ENCODE measurements at regions of chr13 and their contacts with region 1.

Region 1: DNA sequence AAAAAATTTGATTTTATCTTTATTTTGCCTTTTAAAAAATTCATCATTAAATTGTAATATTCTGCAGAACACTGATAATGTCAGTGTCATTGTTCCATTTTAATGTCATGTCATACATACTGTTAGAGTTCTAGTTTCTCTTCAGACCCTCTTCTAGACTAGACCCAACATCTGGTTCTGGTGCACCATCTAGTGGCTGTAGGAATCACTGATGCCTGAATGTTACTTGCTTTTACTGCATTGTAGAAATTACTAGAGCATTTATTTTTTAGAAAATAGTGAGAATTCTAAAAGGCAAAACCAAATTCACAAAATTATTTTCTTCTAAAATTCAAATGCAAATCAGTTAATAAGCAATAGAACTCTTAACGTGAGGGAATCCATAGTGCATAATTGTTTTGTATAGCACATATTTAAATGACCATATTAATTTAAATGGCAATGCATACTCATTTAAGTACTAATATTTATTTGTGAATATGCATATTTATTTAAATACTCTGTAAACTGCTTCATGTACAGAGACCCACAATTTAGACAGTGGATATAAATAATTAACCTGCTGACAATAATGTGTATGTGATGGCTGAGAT is 425.7 kb downstream of the KLF12 start:
- DNase-seq: peak; percentile 54 to 73 (median 65)
- H3K4me3 ChIP-seq: no peak overlapping the region
- H3K4me3 Mint-ChIP-seq: no peak overlapping the region
- H3K27ac ChIP-seq: no peak overlapping the region
- H3K27ac Mint-ChIP-seq: peak overlapping the region in 2 of 7 donors; percentile 70 to 75
- H3K4me1 ChIP-seq: peaks cover 10% of the 10 kb centered on the region
- H3K4me1 Mint-ChIP-seq: peaks cover 13 to 31% (median 20%) of the 10 kb centered on the region in 4 donors
- H3K27me3 ChIP-seq: no peaks in the 10 kb centered on the region
- H3K27me3 Mint-ChIP-seq: no peaks in the 10 kb centered on the region

Region 2: GRCh38 chr13:72808917-72809500 is 899.5 kb before region 1 on chr13:
- CTCF ChIA-PET with region 1: interaction called, 5 read pairs
- POLR2A ChIA-PET with region 1: no interaction called
- intact Hi-C with region 1: loop called (anchors 1 kb)
- DNase-seq: peak in 4 of 5 donors; percentile 6 to 24 (median 15)
- H3K4me3 ChIP-seq: no peak overlapping the region
- H3K4me3 Mint-ChIP-seq: no peak overlapping the region
- H3K27ac ChIP-seq: no peak overlapping the region
- H3K27ac Mint-ChIP-seq: no peak overlapping the region
- H3K4me1 ChIP-seq: no peaks in the 10 kb centered on the region
- H3K4me1 Mint-ChIP-seq: peaks cover 0 to 4% (median under 1%) of the 10 kb centered on the region in 4 donors
- H3K27me3 ChIP-seq: no peaks in the 10 kb centered on the region
- H3K27me3 Mint-ChIP-seq: no peaks in the 10 kb centered on the region

Region 3: DNA sequence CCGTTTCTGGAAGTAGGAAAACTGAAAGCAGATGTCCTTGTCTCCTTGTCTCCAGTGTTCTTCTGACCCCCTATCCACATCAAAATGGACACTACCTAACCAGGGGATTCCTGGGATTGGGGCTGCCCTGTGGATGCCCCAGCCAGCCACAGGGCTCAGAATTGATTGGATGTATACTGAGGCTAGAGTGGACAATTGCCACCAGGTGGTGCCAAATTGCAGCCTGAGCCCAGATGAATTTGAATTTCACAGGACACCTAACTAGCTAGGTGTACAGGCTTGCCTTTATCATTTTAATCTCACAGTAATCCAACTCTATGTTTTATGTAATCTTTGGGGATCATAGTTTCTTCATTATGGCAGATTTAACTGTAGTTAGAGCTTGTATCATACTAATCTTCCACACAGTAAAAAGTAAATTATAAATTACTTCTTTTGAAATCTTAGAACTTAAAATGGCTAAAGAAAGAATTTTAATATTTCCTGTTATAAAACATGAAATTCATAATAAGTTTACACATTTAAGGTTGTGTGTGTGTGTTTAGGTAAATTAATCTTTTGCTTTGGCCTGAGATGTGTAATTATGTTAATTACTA is 868.6 kb before region 1 on chr13:
- CTCF ChIA-PET with region 1: interaction called, 6 read pairs
- POLR2A ChIA-PET with region 1: no interaction called
- intact Hi-C with region 1: loop called (anchors 1 kb)
- DNase-seq: peak in 4 of 5 donors; percentile 10 to 24 (median 22)
- H3K4me3 ChIP-seq: no peak overlapping the region
- H3K4me3 Mint-ChIP-seq: no peak overlapping the region
- H3K27ac ChIP-seq: no peak overlapping the region
- H3K27ac Mint-ChIP-seq: no peak overlapping the region
- H3K4me1 ChIP-seq: peaks cover 3% of the 10 kb centered on the region
- H3K4me1 Mint-ChIP-seq: peaks cover 0 to 7% (median 4%) of the 10 kb centered on the region in 4 donors
- H3K27me3 ChIP-seq: no peaks in the 10 kb centered on the region
- H3K27me3 Mint-ChIP-seq: no peaks in the 10 kb centered on the region

Region 4: GRCh38 chr13:73058736-73059459 is 649.6 kb before region 1 on chr13 and contains the start of gene KLF5:
- CTCF ChIA-PET with region 1: interaction called, 14 read pairs
- POLR2A ChIA-PET with region 1: no interaction called
- intact Hi-C with region 1: loop called (anchors 5 kb)
- DNase-seq: peak; percentile 93 to 97 (median 94)
- H3K4me3 ChIP-seq: peak within 1 kb of the TSS; percentile 52 to 60
- H3K4me3 Mint-ChIP-seq: peak within 1 kb of the TSS; percentile 87 to 95 (median 92)
- H3K27ac ChIP-seq: no peak within 1 kb of the TSS
- H3K27ac Mint-ChIP-seq: peak within 1 kb of the TSS; percentile 72 to 94 (median 84)
- H3K4me1 ChIP-seq: peaks cover 19% of the 10 kb centered on the region
- H3K4me1 Mint-ChIP-seq: peaks cover 14 to 30% (median 18%) of the 10 kb centered on the region in 4 donors
- H3K27me3 ChIP-seq: peaks cover 11% of the 10 kb centered on the region
- H3K27me3 Mint-ChIP-seq: peaks cover 10 to 13% of the 10 kb centered on the region in 2 donors
- total RNA-seq, gene KLF5: 5.0 to 5.4 TPM

Region 5: GRCh38 chr13:73138643-73139491 is 569.6 kb before region 1 on chr13:
- CTCF ChIA-PET with region 1: no interaction called
- POLR2A ChIA-PET with region 1: no interaction called
- intact Hi-C with region 1: loop called (anchors 10 kb)
- DNase-seq: no peak
- H3K4me3 ChIP-seq: no peak overlapping the region
- H3K4me3 Mint-ChIP-seq: no peak overlapping the region
- H3K27ac ChIP-seq: no peak overlapping the region
- H3K27ac Mint-ChIP-seq: no peak overlapping the region
- H3K4me1 ChIP-seq: no peaks in the 10 kb centered on the region
- H3K4me1 Mint-ChIP-seq: no peaks in the 10 kb centered on the region
- H3K27me3 ChIP-seq: no peaks in the 10 kb centered on the region
- H3K27me3 Mint-ChIP-seq: peaks cover 0 to 1% of the 10 kb centered on the region in 2 donors

Region 6: GRCh38 chr13:73228546-73228945 is 479.9 kb before region 1 on chr13:
- CTCF ChIA-PET with region 1: interaction called, 3 read pairs
- POLR2A ChIA-PET with region 1: no interaction called
- intact Hi-C with region 1: loop called (anchors 1 kb)
- DNase-seq: peak in 4 of 5 donors; percentile 14 to 42 (median 27)
- H3K4me3 ChIP-seq: no peak overlapping the region
- H3K4me3 Mint-ChIP-seq: peak overlapping the region in 2 of 8 donors; percentile 2 to 26
- H3K27ac ChIP-seq: no peak overlapping the region
- H3K27ac Mint-ChIP-seq: peak overlapping the region in 4 of 7 donors; percentile 16 to 76 (median 54)
- H3K4me1 ChIP-seq: peaks cover 31% of the 10 kb centered on the region
- H3K4me1 Mint-ChIP-seq: peaks cover 23 to 33% (median 28%) of the 10 kb centered on the region in 4 donors
- H3K27me3 ChIP-seq: no peaks in the 10 kb centered on the region
- H3K27me3 Mint-ChIP-seq: no peaks in the 10 kb centered on the region

Region 7: GRCh38 chr13:73521290-73521624 is 187.2 kb before region 1 on chr13:
- CTCF ChIA-PET with region 1: no interaction called
- POLR2A ChIA-PET with region 1: no interaction called
- intact Hi-C with region 1: loop called (anchors 5 kb)
- DNase-seq: peak in 4 of 5 donors; percentile 20 to 37 (median 29)
- H3K4me3 ChIP-seq: peak overlapping the region; percentile 33 to 35
- H3K4me3 Mint-ChIP-seq: peak overlapping the region; percentile 82 to 93 (median 89)
- H3K27ac ChIP-seq: peak overlapping the region; percentile 23
- H3K27ac Mint-ChIP-seq: peak overlapping the region; percentile 44 to 95 (median 85)
- H3K4me1 ChIP-seq: peaks cover 16% of the 10 kb centered on the region
- H3K4me1 Mint-ChIP-seq: peaks cover 11 to 17% (median 15%) of the 10 kb centered on the region in 4 donors
- H3K27me3 ChIP-seq: no peaks in the 10 kb centered on the region
- H3K27me3 Mint-ChIP-seq: peaks cover 0 to 2% of the 10 kb centered on the region in 2 donors

Region 8: GRCh38 chr13:73782450-73783449 is 74.3 kb after region 1 on chr13:
- CTCF ChIA-PET with region 1: no interaction called
- POLR2A ChIA-PET with region 1: no interaction called
- intact Hi-C with region 1: no loop called
- DNase-seq: no peak
- H3K4me3 ChIP-seq: no peak overlapping the region
- H3K4me3 Mint-ChIP-seq: no peak overlapping the region
- H3K27ac ChIP-seq: no peak overlapping the region
- H3K27ac Mint-ChIP-seq: peak overlapping the region in 6 of 7 donors; percentile 20 to 81 (median 44)
- H3K4me1 ChIP-seq: no peaks in the 10 kb centered on the region
- H3K4me1 Mint-ChIP-seq: peaks cover 40 to 49% (median 41%) of the 10 kb centered on the region in 4 donors
- H3K27me3 ChIP-seq: no peaks in the 10 kb centered on the region
- H3K27me3 Mint-ChIP-seq: no peaks in the 10 kb centered on the region

Measured in CD4-positive, alpha-beta memory T cell (primary cell).